AG04449 (cell line): ENCODE measurements at regions of chr11 and their contacts with region 1.

Region 1: DNA sequence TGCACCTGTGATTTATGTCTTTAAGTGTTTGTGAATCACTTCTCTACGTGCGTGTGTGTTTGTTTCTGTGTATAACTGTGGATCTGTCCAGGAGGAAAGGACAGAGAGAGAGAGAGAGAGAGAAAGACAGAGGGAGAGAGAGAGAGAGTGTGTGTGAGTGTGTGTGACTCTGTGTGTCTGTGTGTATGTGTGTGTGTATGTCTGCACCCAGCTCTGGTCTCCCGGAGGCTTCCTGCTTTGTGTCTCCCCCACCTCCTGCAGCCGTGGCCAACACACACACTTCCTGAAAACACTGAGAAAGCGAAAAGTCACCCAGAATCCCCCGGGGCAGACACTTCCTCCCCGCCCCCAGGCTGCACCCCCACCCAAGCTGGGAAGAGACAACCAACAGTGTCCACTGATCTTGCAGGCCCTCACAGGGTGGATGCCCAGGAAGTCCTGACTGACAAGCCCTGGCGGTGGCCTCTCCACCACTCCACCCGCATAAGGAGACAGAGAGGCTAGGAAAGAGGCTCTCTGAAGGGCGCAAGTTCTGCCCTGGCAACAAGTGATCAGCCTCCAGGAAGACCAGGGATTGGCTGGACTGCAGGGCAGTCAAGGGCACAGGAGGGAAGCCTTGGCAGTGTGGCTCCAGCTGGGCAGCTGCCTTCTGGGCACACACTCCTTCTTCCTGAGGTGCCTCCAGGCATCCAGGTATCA is 30.0 kb downstream of the ARAP1 start:
- DNase-seq: peak; percentile 84
- H3K4me3 ChIP-seq: peak overlapping the region; percentile 77
- CTCF ChIP-seq: no peak

Region 2: GRCh38 chr11:72683782-72684200 is 38.4 kb before region 1 on chr11:
- CTCF ChIA-PET with region 1: interaction called, 10 read pairs
- POLR2A ChIA-PET with region 1: no interaction called
- DNase-seq: no peak
- H3K4me3 ChIP-seq: no peak overlapping the region
- CTCF ChIP-seq: peak; percentile 93

Region 3: DNA sequence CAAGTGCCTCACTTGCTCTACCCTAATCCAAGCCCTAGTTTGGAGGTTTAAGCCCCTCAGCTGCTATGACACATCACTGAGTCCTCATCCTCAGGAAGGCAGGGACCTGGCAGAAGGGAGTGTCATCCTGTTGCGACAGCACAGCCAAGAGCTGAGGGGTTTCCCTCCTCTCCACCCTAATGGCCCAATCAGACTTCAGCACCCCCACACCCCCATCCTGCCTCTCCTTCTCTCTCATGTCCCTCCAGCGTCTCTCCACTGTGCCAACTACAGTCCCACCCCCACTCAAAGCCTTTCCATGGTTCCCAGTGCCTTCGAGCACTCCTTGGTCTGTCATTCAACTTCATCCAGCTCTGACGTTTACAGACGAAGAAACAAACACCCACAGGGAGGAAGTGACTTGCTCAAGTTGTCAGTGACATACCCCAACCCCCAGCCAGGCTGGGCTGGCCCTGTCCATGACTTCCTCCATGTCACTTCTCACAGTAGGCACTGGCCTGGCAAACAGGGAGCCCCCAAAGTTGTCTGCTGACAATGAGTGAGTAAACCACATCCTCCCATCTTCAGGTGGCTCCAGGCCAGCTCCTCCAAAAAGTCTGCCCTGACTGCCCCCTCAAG is 14.4 kb after region 1 on chr11:
- CTCF ChIA-PET with region 1: interaction called, 88 read pairs
- POLR2A ChIA-PET with region 1: no interaction called
- DNase-seq: no peak
- H3K4me3 ChIP-seq: no peak overlapping the region
- CTCF ChIP-seq: no peak

Region 4: GRCh38 chr11:72793425-72794367 is 71.5 kb after region 1 on chr11 and contains the start of gene STARD10:
- CTCF ChIA-PET with region 1: interaction called, 207 read pairs
- POLR2A ChIA-PET with region 1: interaction called, 4 read pairs
- DNase-seq: no peak
- H3K4me3 ChIP-seq: peak within 1 kb of the TSS; percentile 71
- CTCF ChIP-seq: peak; percentile 92

Region 5: DNA sequence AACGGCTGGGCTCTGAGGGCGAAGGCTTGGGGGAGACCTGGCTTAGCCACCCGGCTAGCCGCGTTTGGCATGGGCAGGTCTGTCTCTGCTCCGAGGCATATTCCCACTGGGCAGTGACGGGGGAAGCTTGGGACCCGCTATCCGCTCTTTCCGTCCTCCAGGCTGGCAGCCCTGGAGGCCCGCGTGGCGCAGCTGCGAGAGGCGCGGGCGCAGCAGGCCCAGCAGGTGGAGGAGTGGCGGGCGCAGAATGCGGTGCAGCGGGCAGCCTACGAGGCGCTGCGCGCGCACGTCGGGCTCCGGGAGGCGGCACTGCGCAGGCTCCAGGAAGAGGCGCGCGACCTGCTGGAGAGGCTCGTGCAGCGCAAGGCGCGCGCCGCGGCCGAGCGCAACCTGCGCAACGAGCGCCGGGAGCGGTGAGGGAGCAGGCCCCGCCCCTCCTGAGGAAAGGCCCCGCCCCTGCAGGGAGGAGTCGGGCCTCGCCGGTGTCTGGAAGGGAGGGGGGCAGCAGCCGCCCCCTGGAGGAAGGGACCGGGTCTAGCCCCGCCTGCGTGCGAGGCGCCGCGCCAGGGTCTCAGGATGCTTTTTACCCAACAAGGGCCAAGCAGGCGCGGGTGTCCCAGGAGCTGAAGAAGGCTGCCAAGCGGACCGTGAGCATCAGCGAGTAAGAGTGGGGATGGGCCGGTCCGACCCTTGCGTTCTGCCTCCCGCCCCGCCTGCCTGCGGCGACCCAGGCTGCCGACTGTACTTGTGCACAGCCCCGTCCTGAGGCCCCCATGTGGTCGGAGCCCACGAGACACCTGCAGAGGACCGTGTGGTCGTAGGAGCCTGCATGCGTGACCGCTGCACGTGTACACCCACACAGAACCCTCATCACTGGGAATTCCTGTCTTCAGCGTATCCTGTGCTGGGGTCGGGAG is 99.9 kb after region 1 on chr11:
- CTCF ChIA-PET with region 1: interaction called, 128 read pairs
- POLR2A ChIA-PET with region 1: interaction called, 4 read pairs
- DNase-seq: no peak
- H3K4me3 ChIP-seq: peak overlapping the region; percentile 67
- CTCF ChIP-seq: peak; percentile 37

Region 6: GRCh38 chr11:72939031-72939430 is 216.8 kb after region 1 on chr11:
- CTCF ChIA-PET with region 1: no interaction called
- POLR2A ChIA-PET with region 1: no interaction called
- DNase-seq: no peak
- H3K4me3 ChIP-seq: no peak overlapping the region
- CTCF ChIP-seq: no peak

Region 7: DNA sequence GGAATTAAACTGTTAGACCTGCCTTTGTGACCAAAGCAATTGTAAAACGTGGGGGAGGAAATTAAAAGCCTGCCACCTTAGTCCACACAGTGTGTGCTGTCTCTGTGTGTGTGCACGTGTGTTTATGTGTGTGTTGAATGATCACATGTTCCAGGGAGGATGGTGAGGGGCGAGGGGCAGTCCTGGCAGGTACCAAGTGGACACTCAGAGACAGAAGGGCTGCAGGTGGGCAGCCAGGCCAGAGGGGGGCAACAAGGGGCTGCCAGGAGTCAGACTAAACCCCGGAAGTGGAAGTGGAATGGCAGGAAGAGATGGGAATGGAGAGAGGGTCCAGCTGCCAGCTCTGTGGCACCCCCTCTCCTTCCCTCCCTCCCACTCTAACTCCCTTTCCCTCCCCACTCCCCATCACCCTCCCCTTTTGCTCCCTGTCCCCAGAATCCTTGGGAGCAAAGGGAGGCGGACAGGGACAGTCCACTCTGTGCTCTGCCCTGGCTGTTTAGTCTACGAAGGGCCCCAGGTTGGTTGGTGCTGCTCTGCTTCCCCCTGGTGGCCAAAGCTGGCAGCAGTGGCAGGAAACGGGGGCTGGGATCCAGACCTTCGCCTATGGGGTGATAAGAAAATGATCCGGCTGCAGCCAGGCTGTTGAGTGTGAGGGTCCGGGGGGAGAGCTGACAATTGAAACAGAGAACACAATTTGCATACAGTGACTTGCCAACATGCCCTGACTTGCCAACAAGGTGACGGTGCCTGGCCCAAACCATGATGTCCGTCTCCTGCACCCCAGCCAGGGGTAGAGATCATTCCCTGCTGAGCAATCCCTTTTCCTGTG is 520.3 kb after region 1 on chr11:
- CTCF ChIA-PET with region 1: interaction called, 14 read pairs
- POLR2A ChIA-PET with region 1: no interaction called
- DNase-seq: no peak
- H3K4me3 ChIP-seq: peak overlapping the region; percentile 13; the same call in 1 of the 2 replicates
- CTCF ChIP-seq: peak; percentile 94